Vagina (tissue), 2 donors: ENCODE measurements at regions of chr19 and their contacts with region 1.

Region 1: GRCh38 chr19:5048091-5048726 is 79.3 kb downstream of the KDM4B start:
- DNase-seq: no peak
- H3K4me3 ChIP-seq: peak overlapping the region; percentile 17 to 21
- H3K27ac ChIP-seq: peak overlapping the region; percentile 78
- H3K4me1 ChIP-seq: peaks cover 55% of the 10 kb centered on the region
- H3K27me3 ChIP-seq: no peaks in the 10 kb centered on the region
- CTCF ChIP-seq: peak; percentile 94 to 95 (median 94)
- POLR2A ChIP-seq: no peak

Region 2: DNA sequence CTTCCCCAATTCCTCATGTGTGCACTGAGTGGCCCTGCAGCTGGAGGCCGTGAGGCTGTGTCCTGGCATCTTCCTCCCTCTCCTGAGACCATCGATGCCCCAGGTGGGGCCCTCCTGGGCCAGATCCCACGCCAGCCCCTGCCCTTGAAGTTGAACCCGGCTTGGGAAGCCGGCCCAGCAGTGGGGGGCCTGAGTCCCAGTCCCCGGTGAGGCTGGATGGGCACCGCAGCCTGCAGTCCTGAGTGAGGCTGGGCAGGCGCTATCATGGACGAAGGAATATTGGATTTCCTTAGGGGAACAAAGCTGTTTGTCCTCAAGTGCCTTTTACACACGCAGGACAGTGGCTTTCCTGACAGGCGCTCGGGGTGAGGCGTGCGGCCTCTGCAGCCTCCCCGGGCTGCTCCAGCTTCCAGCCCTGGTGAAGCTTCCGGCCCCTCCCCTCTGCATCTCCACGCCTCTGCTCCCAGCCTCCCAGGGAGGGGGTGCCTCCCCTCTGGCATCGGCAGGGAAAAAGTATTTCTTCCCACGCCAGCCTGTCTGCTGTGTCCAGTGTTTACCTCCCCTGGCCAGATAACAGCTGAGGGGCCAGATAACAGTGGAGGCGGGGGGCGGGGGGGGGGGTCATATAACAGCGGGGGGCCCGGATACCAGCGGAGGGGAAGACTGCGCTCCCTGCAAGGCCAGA is 80.2 kb after region 1 on chr19:
- intact Hi-C with region 1: loop called (anchors 5 kb)
- DNase-seq: no peak
- H3K4me3 ChIP-seq: no peak overlapping the region
- H3K27ac ChIP-seq: peak overlapping the region; percentile 5
- H3K4me1 ChIP-seq: peaks cover 27% of the 10 kb centered on the region
- H3K27me3 ChIP-seq: no peaks in the 10 kb centered on the region
- CTCF ChIP-seq: no peak
- POLR2A ChIP-seq: no peak

Region 3: GRCh38 chr19:5154129-5154798 is 106.1 kb after region 1 on chr19:
- intact Hi-C with region 1: loop called (anchors 5 kb)
- DNase-seq: no peak
- H3K4me3 ChIP-seq: no peak overlapping the region
- H3K27ac ChIP-seq: no peak overlapping the region
- H3K4me1 ChIP-seq: peaks cover 14% of the 10 kb centered on the region
- H3K27me3 ChIP-seq: no peaks in the 10 kb centered on the region
- CTCF ChIP-seq: no peak
- POLR2A ChIP-seq: no peak

Region 4: DNA sequence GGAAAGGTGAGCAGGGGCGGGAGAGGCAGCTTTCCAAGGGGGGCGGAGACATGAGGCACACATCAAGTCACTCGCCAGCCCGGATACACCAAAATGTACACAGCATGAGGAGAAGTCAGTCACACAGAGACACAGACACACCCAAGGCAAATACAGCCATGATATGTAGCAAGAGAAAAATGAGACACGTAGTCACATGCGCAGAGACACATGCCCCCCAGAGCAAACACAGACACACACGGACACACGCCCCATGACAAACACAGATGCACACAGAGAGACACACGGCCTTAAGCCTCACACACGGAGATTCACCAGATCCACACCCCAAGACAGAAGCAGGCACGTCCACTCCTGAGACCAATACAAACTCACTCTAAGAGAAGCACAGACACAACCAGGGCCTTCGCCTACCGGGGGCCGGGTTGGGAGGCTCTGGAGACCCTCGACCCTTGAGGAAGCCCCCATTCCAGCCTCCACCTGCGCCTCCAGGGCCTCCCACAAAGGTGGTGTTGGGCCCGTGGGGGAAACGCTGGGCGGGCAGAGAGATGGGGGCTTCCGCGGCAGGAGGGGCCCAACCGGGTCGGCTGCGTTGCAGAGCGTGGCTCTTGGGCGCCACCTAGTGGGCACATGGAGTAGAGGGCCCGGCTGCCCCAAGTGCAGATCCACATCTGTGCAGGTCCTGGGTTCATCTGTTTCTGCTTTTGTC is 529.7 kb after region 1 on chr19:
- intact Hi-C with region 1: loop called (anchors 5 kb)
- DNase-seq: no peak
- H3K4me3 ChIP-seq: peak overlapping the region in 1 of 2 donors; percentile 15
- H3K27ac ChIP-seq: peak overlapping the region; percentile 64
- H3K4me1 ChIP-seq: peaks cover 9% of the 10 kb centered on the region
- H3K27me3 ChIP-seq: no peaks in the 10 kb centered on the region
- CTCF ChIP-seq: peak; percentile 76 to 92 (median 87)
- POLR2A ChIP-seq: no peak